ENCODE measurements at regions of chr7 and their contacts with region 1.

Region 1: GRCh38 chr7:104983578-104984539 is 30.1 kb upstream of the KMT2E start:
- DNase-seq: peak; percentile 89
- H3K4me3 Mint-ChIP-seq: peak overlapping the region; percentile 98
- H3K27ac Mint-ChIP-seq: peak overlapping the region; percentile 100
- H3K4me1 Mint-ChIP-seq: peaks cover 65% of the 10 kb centered on the region
- H3K27me3 Mint-ChIP-seq: no peaks in the 10 kb centered on the region

Region 2: GRCh38 chr7:104791080-104791479 is 192.8 kb before region 1 on chr7:
- CTCF ChIA-PET with region 1: no interaction called
- intact Hi-C with region 1: no loop called
- DNase-seq: no peak
- H3K4me3 Mint-ChIP-seq: no peak overlapping the region
- H3K27ac Mint-ChIP-seq: no peak overlapping the region
- H3K4me1 Mint-ChIP-seq: no peaks in the 10 kb centered on the region
- H3K27me3 Mint-ChIP-seq: peaks cover 15% of the 10 kb centered on the region

Region 3: DNA sequence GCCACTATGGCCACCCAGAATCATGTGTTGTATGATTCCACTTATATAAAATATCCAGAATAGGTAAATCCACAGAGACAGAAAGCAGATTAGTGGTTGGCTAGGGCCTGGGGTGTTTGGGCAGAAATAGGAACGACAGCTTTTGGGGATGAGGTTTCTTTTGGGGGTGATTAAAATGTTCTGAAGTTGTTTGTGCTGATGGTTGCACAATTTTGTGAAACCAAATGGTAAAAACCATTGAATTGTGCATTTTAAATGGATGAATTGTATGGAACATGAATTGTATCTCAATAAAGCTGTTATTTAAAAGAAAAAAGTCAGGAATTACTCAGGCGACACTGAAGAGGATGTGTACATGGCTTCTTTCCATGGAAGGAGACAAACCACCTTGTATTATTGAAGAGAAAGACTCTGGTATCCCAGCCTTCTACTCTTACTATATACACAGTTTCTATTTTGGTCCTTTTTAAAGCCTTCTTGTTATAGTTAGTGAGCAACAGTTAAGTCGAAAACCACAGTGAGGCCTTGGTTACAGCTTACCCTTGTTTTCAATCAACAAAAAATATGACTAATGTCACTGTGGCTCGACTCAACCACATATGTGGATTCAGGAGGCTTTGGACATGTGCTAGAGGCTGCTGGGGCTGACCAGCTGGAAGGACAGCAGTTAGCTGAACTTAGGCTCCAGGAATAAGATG is 27.0 kb before region 1 on chr7:
- CTCF ChIA-PET with region 1: interaction called, 3 read pairs
- intact Hi-C with region 1: loop called (anchors 1 kb)
- DNase-seq: peak; percentile 38
- H3K4me3 Mint-ChIP-seq: no peak overlapping the region
- H3K27ac Mint-ChIP-seq: peak overlapping the region; percentile 74
- H3K4me1 Mint-ChIP-seq: peaks cover 19% of the 10 kb centered on the region
- H3K27me3 Mint-ChIP-seq: no peaks in the 10 kb centered on the region

Region 4: GRCh38 chr7:105013221-105013815 is 29.5 kb after region 1 on chr7:
- CTCF ChIA-PET with region 1: interaction called, 140 read pairs
- intact Hi-C with region 1: loop called (anchors 1 kb)
- DNase-seq: peak; percentile 94
- H3K4me3 Mint-ChIP-seq: peak overlapping the region; percentile 95
- H3K27ac Mint-ChIP-seq: peak overlapping the region; percentile 99
- H3K4me1 Mint-ChIP-seq: peaks cover 25% of the 10 kb centered on the region
- H3K27me3 Mint-ChIP-seq: no peaks in the 10 kb centered on the region

Region 5: GRCh38 chr7:105098863-105099515 is 115.1 kb after region 1 on chr7:
- CTCF ChIA-PET with region 1: interaction called, 5 read pairs
- intact Hi-C with region 1: loop called (anchors 1 kb)
- DNase-seq: no peak
- H3K4me3 Mint-ChIP-seq: no peak overlapping the region
- H3K27ac Mint-ChIP-seq: peak overlapping the region; percentile 73
- H3K4me1 Mint-ChIP-seq: peaks cover 59% of the 10 kb centered on the region
- H3K27me3 Mint-ChIP-seq: no peaks in the 10 kb centered on the region

Region 6: DNA sequence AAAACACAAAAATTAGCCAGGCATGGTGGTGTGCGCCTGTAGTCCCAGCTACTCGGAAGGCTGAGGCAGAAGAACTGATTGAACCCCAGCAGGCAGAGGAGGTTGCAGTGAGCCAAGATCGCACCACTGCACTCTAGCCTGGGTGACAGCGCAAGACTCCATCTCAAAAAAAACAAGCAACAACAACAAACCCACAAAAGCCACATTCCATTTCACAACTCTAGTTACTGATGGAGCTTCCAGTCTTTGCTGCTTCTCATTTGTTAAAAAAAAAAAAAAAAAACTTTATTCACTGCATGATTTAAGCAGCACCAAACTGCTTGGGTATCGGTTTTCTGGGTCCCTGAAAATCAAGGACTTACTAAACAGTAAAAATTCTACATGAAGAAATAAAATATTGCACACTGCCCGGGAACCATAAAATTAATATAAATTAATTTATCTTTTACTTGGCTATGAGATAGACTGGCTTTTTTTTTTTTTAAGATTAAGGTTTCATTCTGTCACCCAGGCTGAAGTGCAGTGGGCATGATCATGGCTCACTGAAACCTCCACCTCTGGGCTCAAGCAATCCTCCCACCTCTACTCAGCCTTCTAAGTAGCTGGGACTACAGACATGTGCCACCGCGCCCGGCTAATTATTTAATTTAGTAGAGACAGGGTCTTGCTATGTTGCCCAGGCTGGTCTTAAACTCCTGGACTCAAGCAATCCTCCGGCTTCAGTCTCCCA is 362.9 kb after region 1 on chr7:
- CTCF ChIA-PET with region 1: no interaction called
- intact Hi-C with region 1: loop called (anchors 2 kb)
- DNase-seq: no peak
- H3K4me3 Mint-ChIP-seq: no peak overlapping the region
- H3K27ac Mint-ChIP-seq: no peak overlapping the region
- H3K4me1 Mint-ChIP-seq: peaks cover 66% of the 10 kb centered on the region
- H3K27me3 Mint-ChIP-seq: no peaks in the 10 kb centered on the region

Region 7: GRCh38 chr7:105531792-105532671 is 548.2 kb after region 1 on chr7 and contains the start of gene RINT1:
- CTCF ChIA-PET with region 1: interaction called, 3 read pairs
- intact Hi-C with region 1: loop called (anchors 5 kb)
- DNase-seq: peak; percentile 95
- H3K4me3 Mint-ChIP-seq: peak within 1 kb of the TSS; percentile 83
- H3K27ac Mint-ChIP-seq: peak within 1 kb of the TSS; percentile 85
- H3K4me1 Mint-ChIP-seq: peaks cover 23% of the 10 kb centered on the region
- H3K27me3 Mint-ChIP-seq: no peaks in the 10 kb centered on the region
- total RNA-seq, gene RINT1: 22.1 to 25.2 TPM

Measured in activated naive CD4-positive, alpha-beta T cell treated with anti-CD3 and anti-CD28 coated beads for 36 hours (primary cell).